ENCODE measurements at regions of chrX and their contacts with region 1.

Region 1: GRCh38 chrX:106481341-106481740 is 130.4 kb upstream of the RADX start:
- DNase-seq: peak; percentile 67
- H3K4me3 Mint-ChIP-seq: no peak overlapping the region
- H3K27ac Mint-ChIP-seq: no peak overlapping the region
- H3K4me1 Mint-ChIP-seq: peaks cover 5% of the 10 kb centered on the region
- H3K27me3 Mint-ChIP-seq: peaks cover 45% of the 10 kb centered on the region
- CTCF ChIP-seq: peak; percentile 82

Region 2: DNA sequence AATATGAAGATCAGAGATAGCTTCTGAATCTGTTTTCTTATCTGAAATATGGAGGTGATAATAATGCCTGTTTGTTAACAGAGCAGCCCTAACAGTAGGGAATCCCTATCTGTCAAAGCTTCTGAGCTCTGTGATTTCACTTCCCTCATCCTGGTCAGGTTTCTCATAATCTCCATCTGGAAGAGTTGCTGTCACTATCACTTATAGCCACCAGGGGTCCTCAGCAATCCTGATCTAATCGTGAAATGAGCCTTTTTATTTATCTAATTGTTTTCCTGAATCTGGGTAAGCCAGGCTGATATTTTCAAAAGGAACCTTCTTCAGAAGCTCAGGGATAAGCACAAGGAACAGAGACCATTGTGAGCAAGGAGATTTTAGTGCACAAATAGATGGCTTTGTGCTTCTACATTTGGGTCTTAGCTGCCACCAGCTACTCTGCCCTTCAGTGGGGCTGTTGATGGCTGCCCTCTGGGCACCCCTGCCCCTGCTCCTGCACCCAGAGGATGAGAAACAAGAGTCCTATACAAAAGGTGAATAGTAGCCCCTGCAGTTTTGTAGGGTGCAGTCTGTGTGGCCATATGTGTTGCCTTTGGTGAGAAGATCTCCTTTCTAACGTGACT is 66.0 kb before region 1 on chrX:
- CTCF ChIA-PET with region 1: interaction called, 13 read pairs
- POLR2A ChIA-PET with region 1: no interaction called
- intact Hi-C with region 1: no loop called
- DNase-seq: peak; percentile 60
- H3K4me3 Mint-ChIP-seq: no peak overlapping the region
- H3K27ac Mint-ChIP-seq: no peak overlapping the region
- H3K4me1 Mint-ChIP-seq: no peaks in the 10 kb centered on the region
- H3K27me3 Mint-ChIP-seq: peaks cover 59% of the 10 kb centered on the region
- CTCF ChIP-seq: peak; percentile 60

Region 3: GRCh38 chrX:106499473-106499872 is 18.1 kb after region 1 on chrX:
- CTCF ChIA-PET with region 1: interaction called, 11 read pairs
- POLR2A ChIA-PET with region 1: no interaction called
- intact Hi-C with region 1: no loop called
- DNase-seq: no peak
- H3K4me3 Mint-ChIP-seq: no peak overlapping the region
- H3K27ac Mint-ChIP-seq: no peak overlapping the region
- H3K4me1 Mint-ChIP-seq: no peaks in the 10 kb centered on the region
- H3K27me3 Mint-ChIP-seq: peaks cover 56% of the 10 kb centered on the region
- CTCF ChIP-seq: no peak

Region 4: DNA sequence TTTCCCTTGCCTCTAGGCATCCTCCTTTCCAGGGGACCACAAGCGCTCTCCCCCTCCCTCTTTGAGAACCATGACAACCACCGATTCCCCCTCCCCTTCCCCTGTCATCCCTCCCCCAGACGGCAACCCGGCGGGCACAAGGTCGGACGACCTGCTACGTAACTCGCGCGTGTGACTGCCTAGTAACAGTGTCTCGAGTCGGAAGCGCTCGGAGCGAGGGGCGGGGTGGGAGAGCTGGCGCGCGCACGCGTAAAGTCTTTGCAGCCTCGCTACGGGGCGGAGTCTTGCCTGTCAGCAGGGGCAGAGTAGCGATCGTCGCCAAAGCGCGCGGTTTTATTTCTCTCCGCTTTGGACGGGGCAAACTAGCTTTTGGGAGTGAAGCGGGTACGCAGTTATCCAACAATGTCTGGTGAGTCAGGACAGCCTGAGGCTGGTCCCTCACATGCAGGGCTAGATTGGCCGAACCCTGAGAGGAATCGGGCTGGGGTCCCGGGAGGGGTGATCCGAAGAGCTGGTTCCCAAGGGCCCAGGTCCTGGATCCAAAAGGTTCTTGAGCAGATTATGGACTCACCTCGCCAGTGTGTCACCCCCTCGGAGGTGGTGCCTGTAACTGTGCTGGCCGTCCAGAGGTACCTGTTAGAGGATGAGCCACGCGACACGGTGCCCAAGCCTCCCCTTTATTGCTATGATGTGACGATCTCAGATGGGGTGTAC is 130.5 kb after region 1 on chrX and contains the start of gene RADX:
- CTCF ChIA-PET with region 1: interaction called, 10 read pairs
- POLR2A ChIA-PET with region 1: no interaction called
- intact Hi-C with region 1: no loop called
- DNase-seq: peak; percentile 74
- H3K4me3 Mint-ChIP-seq: peak within 1 kb of the TSS; percentile 89
- H3K27ac Mint-ChIP-seq: peak within 1 kb of the TSS; percentile 85
- H3K4me1 Mint-ChIP-seq: peaks cover 6% of the 10 kb centered on the region
- H3K27me3 Mint-ChIP-seq: peaks cover 78% of the 10 kb centered on the region
- CTCF ChIP-seq: no peak
- total RNA-seq, gene RADX: 2.2 TPM in 2 replicates

Region 5: GRCh38 chrX:106619797-106620196 is 138.5 kb after region 1 on chrX:
- CTCF ChIA-PET with region 1: interaction called, 38 read pairs
- POLR2A ChIA-PET with region 1: interaction called, 5 read pairs
- intact Hi-C with region 1: loop called (anchors 1 kb)
- DNase-seq: peak; percentile 23
- H3K4me3 Mint-ChIP-seq: no peak overlapping the region
- H3K27ac Mint-ChIP-seq: no peak overlapping the region
- H3K4me1 Mint-ChIP-seq: no peaks in the 10 kb centered on the region
- H3K27me3 Mint-ChIP-seq: peaks cover 43% of the 10 kb centered on the region
- CTCF ChIP-seq: peak; percentile 43

Region 6: GRCh38 chrX:106692425-106693065 is 211.2 kb after region 1 on chrX:
- CTCF ChIA-PET with region 1: no interaction called
- POLR2A ChIA-PET with region 1: no interaction called
- intact Hi-C with region 1: no loop called
- DNase-seq: no peak
- H3K4me3 Mint-ChIP-seq: no peak overlapping the region
- H3K27ac Mint-ChIP-seq: no peak overlapping the region
- H3K4me1 Mint-ChIP-seq: no peaks in the 10 kb centered on the region
- H3K27me3 Mint-ChIP-seq: peaks cover 67% of the 10 kb centered on the region
- CTCF ChIP-seq: no peak

Region 7: DNA sequence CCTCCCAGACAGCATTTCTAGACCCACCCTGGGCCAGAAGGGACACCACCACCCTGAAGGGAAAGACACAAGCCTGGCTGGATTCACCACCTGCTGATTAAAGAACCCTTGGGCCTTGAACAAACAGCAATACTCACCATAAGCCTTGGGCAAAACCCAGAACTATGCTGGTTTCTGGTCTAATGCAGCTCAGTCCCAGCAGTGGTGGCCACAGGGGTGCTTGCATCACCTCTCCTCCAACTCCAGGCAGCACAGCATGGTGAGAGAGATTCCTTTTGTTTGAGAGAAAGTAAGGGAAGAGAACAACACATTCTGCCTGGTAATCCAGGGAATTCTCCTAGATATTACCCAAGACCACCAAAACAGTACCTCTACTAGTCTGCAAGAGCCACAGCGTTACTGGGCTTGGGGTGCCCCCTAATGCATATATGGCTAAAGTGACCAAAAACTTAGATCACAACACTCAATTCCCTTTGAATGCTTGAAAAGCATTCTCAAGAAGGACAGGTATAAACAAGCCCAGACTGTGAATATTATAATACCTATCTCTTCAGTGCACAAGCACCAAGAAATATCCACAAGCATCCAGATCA is 270.8 kb after region 1 on chrX:
- CTCF ChIA-PET with region 1: interaction called, 7 read pairs
- POLR2A ChIA-PET with region 1: no interaction called
- intact Hi-C with region 1: loop called (anchors 5 kb)
- DNase-seq: peak; percentile 12
- H3K4me3 Mint-ChIP-seq: no peak overlapping the region
- H3K27ac Mint-ChIP-seq: no peak overlapping the region
- H3K4me1 Mint-ChIP-seq: peaks cover 5% of the 10 kb centered on the region
- H3K27me3 Mint-ChIP-seq: peaks cover 57% of the 10 kb centered on the region
- CTCF ChIP-seq: peak; percentile 27

Region 8: GRCh38 chrX:106791495-106791894 is 310.2 kb after region 1 on chrX:
- CTCF ChIA-PET with region 1: interaction called, 13 read pairs
- POLR2A ChIA-PET with region 1: no interaction called
- intact Hi-C with region 1: loop called (anchors 1 kb)
- DNase-seq: peak; percentile 32
- H3K4me3 Mint-ChIP-seq: no peak overlapping the region
- H3K27ac Mint-ChIP-seq: no peak overlapping the region
- H3K4me1 Mint-ChIP-seq: no peaks in the 10 kb centered on the region
- H3K27me3 Mint-ChIP-seq: peaks cover 54% of the 10 kb centered on the region
- CTCF ChIP-seq: peak; percentile 49

Region 9: GRCh38 chrX:106997611-106998010 is 516.3 kb after region 1 on chrX:
- CTCF ChIA-PET with region 1: no interaction called
- POLR2A ChIA-PET with region 1: no interaction called
- intact Hi-C with region 1: no loop called
- DNase-seq: no peak
- H3K4me3 Mint-ChIP-seq: no peak overlapping the region
- H3K27ac Mint-ChIP-seq: no peak overlapping the region
- H3K4me1 Mint-ChIP-seq: peaks cover 15% of the 10 kb centered on the region
- H3K27me3 Mint-ChIP-seq: peaks cover 77% of the 10 kb centered on the region
- CTCF ChIP-seq: no peak